GM12878 (cell line): ENCODE measurements at regions of chr16 and their contacts with region 1.

Region 1: DNA sequence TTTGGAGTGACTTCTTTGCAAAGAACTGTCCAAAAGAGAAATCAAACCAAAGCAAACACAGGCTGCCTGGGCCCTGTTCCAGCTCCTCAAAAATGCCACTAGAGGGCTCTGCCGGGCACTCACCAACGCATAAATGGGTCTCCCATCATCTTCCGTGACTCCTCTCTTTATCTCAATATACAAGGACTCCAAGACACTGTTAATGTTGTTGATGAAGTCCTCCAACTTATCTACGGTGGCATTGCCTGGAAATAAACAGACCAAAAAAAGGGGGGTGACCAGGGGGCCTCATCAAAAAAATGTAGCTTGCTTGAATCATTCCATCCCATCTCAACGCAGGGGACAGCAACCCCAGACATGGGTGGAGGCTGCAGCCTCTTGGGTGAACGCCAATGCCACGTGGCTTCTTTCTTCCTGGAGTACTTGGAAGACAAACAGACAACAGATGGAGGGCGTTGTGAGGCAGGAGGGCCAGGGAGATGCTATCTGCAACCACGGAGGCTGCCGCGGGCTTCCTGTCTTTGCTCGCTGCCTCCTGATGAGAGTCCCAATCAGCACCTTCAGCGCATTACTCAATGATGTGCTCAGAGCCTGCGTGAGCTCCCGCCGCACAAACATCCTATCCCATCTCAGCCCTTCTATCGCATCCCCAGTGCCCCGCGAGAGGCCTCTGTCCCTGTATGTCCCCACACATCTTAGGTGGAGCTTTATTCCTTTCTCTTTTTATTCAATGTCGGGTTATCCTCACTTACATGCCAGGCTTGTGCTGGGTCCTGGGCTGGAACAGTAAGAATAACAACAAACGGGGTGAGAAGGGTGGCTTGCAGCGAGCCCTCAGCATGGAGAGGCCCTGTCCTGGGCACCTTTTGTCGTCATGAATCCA is 32.0 kb downstream of the KDM8 start:
- DNase-seq: peak; percentile 38
- ATAC-seq: peak; percentile 49
- H3K4me3 ChIP-seq: no peak overlapping the region
- H3K27ac ChIP-seq: no peak overlapping the region
- H3K4me1 ChIP-seq: peaks cover 56% of the 10 kb centered on the region
- H3K27me3 ChIP-seq: no peaks in the 10 kb centered on the region
- CTCF ChIP-seq: peak; percentile 88 to 95 (median 89); a peak in 5 of 6 replicates
- EP300 ChIP-seq: no peak
- POLR2A ChIP-seq: no peak
- RAD21 ChIP-seq: peak; percentile 90

Region 2: GRCh38 chr16:27203429-27204231 is 31.7 kb before region 1 on chr16 and contains the start of gene KDM8:
- CTCF ChIA-PET with region 1: interaction called, 46 read pairs
- POLR2A ChIA-PET with region 1: interaction called, 8 read pairs
- RAD21 ChIA-PET with region 1: interaction called, 10 read pairs
- SMC1A ChIA-PET with region 1: interaction called, 7 read pairs
- in situ Hi-C with region 1: no loop called
- intact Hi-C with region 1: no loop called
- DNase-seq: peak; percentile 99
- ATAC-seq: peak; percentile 90
- H3K4me3 ChIP-seq: peak within 1 kb of the TSS; percentile 80
- H3K27ac ChIP-seq: peak within 1 kb of the TSS; percentile 97
- H3K4me1 ChIP-seq: peaks cover 25% of the 10 kb centered on the region
- H3K27me3 ChIP-seq: no peaks in the 10 kb centered on the region
- CTCF ChIP-seq: no peak
- EP300 ChIP-seq: no peak
- POLR2A ChIP-seq: peak; percentile 88
- RAD21 ChIP-seq: no peak
- polyA plus RNA-seq, gene KDM8: 0.79 to 1.3 TPM

Region 3: GRCh38 chr16:27268376-27269299 is 33.3 kb after region 1 on chr16 and contains the start of gene NSMCE1:
- CTCF ChIA-PET with region 1: interaction called, 121 read pairs
- POLR2A ChIA-PET with region 1: interaction called, 34 read pairs
- RAD21 ChIA-PET with region 1: interaction called, 105 read pairs
- SMC1A ChIA-PET with region 1: interaction called, 178 read pairs
- in situ Hi-C with region 1: no loop called
- intact Hi-C with region 1: no loop called
- DNase-seq: peak; percentile 84
- ATAC-seq: peak; percentile 95
- H3K4me3 ChIP-seq: peak within 1 kb of the TSS; percentile 81
- H3K27ac ChIP-seq: peak within 1 kb of the TSS; percentile 79
- H3K4me1 ChIP-seq: peaks cover 4% of the 10 kb centered on the region
- H3K27me3 ChIP-seq: no peaks in the 10 kb centered on the region
- CTCF ChIP-seq: peak; percentile 12 to 42 (median 13); a peak in 2 of 6 replicates
- EP300 ChIP-seq: 0 out of 4 replicates have a peak, but pooled peaks have one; percentile 21 to 25
- POLR2A ChIP-seq: peak; percentile 96
- RAD21 ChIP-seq: no peak
- polyA plus RNA-seq, gene NSMCE1: 168 to 214 TPM

Region 4: GRCh38 chr16:27314161-27314723 is 78.9 kb after region 1 on chr16:
- CTCF ChIA-PET with region 1: interaction called, 119 read pairs
- POLR2A ChIA-PET with region 1: interaction called, 6 read pairs
- RAD21 ChIA-PET with region 1: interaction called, 93 read pairs
- SMC1A ChIA-PET with region 1: interaction called, 88 read pairs
- in situ Hi-C with region 1: loop called (anchors 5 kb)
- intact Hi-C with region 1: loop called (anchors 1 kb)
- DNase-seq: no peak
- ATAC-seq: peak; percentile 56
- H3K4me3 ChIP-seq: peak overlapping the region; percentile 80
- H3K27ac ChIP-seq: peak overlapping the region; percentile 82
- H3K4me1 ChIP-seq: peaks cover 30% of the 10 kb centered on the region
- H3K27me3 ChIP-seq: 0 out of 4 replicates have a peak, but pooled peaks cover 0 to 2% of the 10 kb centered on the region in 2 experiments
- CTCF ChIP-seq: no peak
- EP300 ChIP-seq: no peak; a peak in 1 of 4 replicates
- POLR2A ChIP-seq: peak; percentile 38; the same call in 1 of the 2 replicates
- RAD21 ChIP-seq: no peak

Region 5: GRCh38 chr16:27355610-27356009 is 120.3 kb after region 1 on chr16:
- CTCF ChIA-PET with region 1: interaction called, 35 read pairs
- POLR2A ChIA-PET with region 1: interaction called, 4 read pairs
- RAD21 ChIA-PET with region 1: interaction called, 8 read pairs
- SMC1A ChIA-PET with region 1: interaction called, 12 read pairs
- in situ Hi-C with region 1: no loop called
- intact Hi-C with region 1: no loop called
- DNase-seq: no peak
- ATAC-seq: peak; percentile 73
- H3K4me3 ChIP-seq: no peak overlapping the region
- H3K27ac ChIP-seq: no peak overlapping the region
- H3K4me1 ChIP-seq: no peaks in the 10 kb centered on the region
- H3K27me3 ChIP-seq: no peaks in the 10 kb centered on the region
- CTCF ChIP-seq: peak; percentile 30 to 47 (median 44); a peak in 4 of 6 replicates
- EP300 ChIP-seq: no peak
- POLR2A ChIP-seq: no peak
- RAD21 ChIP-seq: peak; percentile 50; the same call in 1 of the 2 replicates

Region 6: DNA sequence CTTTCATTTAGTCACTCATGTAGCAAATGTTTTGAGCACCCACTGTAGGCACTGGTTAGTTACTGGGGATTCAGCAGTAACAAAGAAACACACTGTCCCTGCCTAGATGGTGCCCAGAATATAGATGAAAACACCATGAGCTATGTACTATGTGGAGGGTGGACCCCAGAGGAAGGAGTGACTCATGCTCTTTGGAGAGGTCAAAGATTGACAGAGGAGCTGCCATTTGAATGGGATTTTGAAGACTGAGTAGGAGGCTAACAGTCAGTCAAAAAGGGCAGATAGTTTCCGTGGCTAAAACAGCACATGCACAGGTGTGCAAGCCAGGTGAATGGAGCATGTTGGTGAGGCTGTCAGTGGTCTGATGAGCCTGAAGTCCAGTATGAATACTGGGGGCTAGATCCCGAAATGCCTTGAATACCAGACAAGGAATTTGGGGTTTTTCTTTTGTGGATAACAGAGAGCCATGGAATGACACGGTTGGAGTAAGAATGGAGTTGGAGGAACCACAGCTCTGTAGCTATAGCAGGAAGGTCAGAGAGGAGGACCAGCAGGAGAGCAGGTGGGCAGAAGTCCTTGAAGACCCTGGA is 172.8 kb after region 1 on chr16:
- CTCF ChIA-PET with region 1: interaction called, 6 read pairs
- POLR2A ChIA-PET with region 1: interaction called, 3 read pairs
- RAD21 ChIA-PET with region 1: interaction called, 16 read pairs
- SMC1A ChIA-PET with region 1: interaction called, 28 read pairs
- in situ Hi-C with region 1: no loop called
- intact Hi-C with region 1: no loop called
- DNase-seq: peak; percentile 76
- ATAC-seq: peak; percentile 51
- H3K4me3 ChIP-seq: peak overlapping the region; percentile 86
- H3K27ac ChIP-seq: peak overlapping the region; percentile 97
- H3K4me1 ChIP-seq: peaks cover 28% of the 10 kb centered on the region
- H3K27me3 ChIP-seq: no peaks in the 10 kb centered on the region
- CTCF ChIP-seq: no peak
- EP300 ChIP-seq: peak in 1 of 2 experiments; percentile 11; a peak in 1 of 4 replicates
- POLR2A ChIP-seq: peak; percentile 53; the same call in 1 of the 2 replicates
- RAD21 ChIP-seq: no peak

Region 7: GRCh38 chr16:27461483-27462171 is 226.3 kb after region 1 on chr16:
- CTCF ChIA-PET with region 1: interaction called, 3 read pairs
- POLR2A ChIA-PET with region 1: no interaction called
- RAD21 ChIA-PET with region 1: interaction called, 4 read pairs
- SMC1A ChIA-PET with region 1: no interaction called
- in situ Hi-C with region 1: loop called (anchors 5 kb)
- intact Hi-C with region 1: loop called (anchors 1 kb)
- DNase-seq: no peak
- ATAC-seq: no peak
- H3K4me3 ChIP-seq: no peak overlapping the region
- H3K27ac ChIP-seq: no peak overlapping the region
- H3K4me1 ChIP-seq: peaks cover 4% of the 10 kb centered on the region
- H3K27me3 ChIP-seq: no peaks in the 10 kb centered on the region
- CTCF ChIP-seq: no peak
- EP300 ChIP-seq: no peak
- POLR2A ChIP-seq: no peak
- RAD21 ChIP-seq: no peak

Region 8: GRCh38 chr16:27472091-27473020 is 237.1 kb after region 1 on chr16:
- CTCF ChIA-PET with region 1: no interaction called
- POLR2A ChIA-PET with region 1: no interaction called
- RAD21 ChIA-PET with region 1: no interaction called
- SMC1A ChIA-PET with region 1: no interaction called
- in situ Hi-C with region 1: no loop called
- intact Hi-C with region 1: no loop called
- DNase-seq: no peak
- ATAC-seq: no peak
- H3K4me3 ChIP-seq: no peak overlapping the region
- H3K27ac ChIP-seq: no peak overlapping the region
- H3K4me1 ChIP-seq: no peaks in the 10 kb centered on the region
- H3K27me3 ChIP-seq: no peaks in the 10 kb centered on the region
- CTCF ChIP-seq: no peak
- EP300 ChIP-seq: no peak
- POLR2A ChIP-seq: peak; percentile 23; the same call in 1 of the 2 replicates
- RAD21 ChIP-seq: no peak

Region 9: DNA sequence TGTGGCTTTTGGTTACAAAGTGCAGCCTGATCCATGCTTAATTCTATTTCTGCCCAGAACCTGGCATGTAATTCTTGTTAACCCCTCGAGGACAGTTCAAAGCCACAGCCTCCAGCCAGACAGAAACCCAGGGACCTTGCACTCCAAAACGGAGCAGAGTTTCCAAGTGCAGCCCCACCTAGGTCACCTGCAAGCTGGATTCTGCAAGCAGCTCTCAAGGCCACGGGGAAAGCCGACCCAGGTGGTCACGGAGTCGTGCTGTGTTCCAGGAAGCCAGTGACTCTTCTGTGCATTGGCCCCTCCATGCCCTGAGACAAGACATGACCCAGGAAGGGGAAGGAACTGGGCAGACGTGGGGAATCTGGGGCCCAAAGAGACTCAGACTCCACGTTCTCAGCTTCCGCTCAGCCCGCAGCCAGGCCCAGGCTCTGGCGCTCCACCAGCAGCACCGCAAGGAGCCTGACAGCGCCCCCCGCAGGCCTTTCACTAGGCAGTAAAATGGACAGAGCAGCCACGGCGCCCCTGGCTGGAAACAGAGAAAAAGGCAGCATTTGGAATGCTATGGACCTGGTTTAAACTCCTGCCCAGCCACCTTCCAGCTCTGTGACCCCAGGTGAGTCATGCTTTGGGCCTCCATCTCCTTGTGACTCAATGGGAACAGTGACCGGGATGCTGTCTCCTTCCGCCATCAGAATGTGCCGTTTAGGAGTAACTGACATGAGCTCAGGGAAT is 855.5 kb after region 1 on chr16:
- CTCF ChIA-PET with region 1: no interaction called
- POLR2A ChIA-PET with region 1: no interaction called
- RAD21 ChIA-PET with region 1: no interaction called
- SMC1A ChIA-PET with region 1: no interaction called
- in situ Hi-C with region 1: no loop called
- intact Hi-C with region 1: no loop called
- DNase-seq: no peak
- ATAC-seq: no peak
- H3K4me3 ChIP-seq: no peak overlapping the region
- H3K27ac ChIP-seq: no peak overlapping the region
- H3K4me1 ChIP-seq: no peaks in the 10 kb centered on the region
- H3K27me3 ChIP-seq: no peaks in the 10 kb centered on the region
- CTCF ChIP-seq: peak in 1 of 3 experiments; percentile 15; a peak in 1 of 6 replicates
- EP300 ChIP-seq: no peak
- POLR2A ChIP-seq: no peak; the same call in 1 of the 2 replicates
- RAD21 ChIP-seq: no peak